ENCODE measurements at regions of chr6 and their contacts with region 1.

Region 1: DNA sequence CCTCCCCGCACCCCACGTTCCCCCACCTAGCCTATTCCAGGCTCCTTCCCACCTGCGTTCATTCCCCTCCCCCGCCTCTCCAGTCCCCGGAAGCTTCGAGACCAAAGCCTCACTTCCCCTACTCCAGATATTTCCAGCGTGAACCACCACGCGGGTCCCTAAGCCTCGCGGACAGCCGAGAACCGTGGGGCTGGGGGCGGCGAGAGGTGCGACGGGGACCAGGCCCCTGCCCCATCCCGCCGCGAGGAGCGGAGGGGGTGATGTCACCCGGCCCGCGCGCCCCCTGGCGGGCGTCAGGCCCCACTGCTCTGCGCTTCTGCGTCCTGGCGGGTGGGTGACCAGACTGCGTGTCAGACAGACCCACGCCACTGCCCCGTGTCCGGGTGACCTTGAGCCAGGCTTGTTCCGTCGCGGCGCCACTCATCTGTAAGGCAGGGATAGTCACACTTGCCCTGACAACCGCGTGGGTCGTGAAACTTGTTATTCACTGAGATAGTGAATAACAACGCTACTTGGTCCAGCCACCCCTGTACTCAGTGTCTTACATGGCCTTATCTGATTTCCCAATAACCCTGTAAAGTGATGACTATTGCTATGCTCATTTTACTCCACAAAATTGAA is 9.0 kb upstream of the HSP90AB1 start:
- DNase-seq: peak; percentile 84
- H3K4me3 ChIP-seq: peak overlapping the region; percentile 57
- H3K27ac ChIP-seq: no peak overlapping the region
- H3K4me1 ChIP-seq: peaks cover 22% of the 10 kb centered on the region
- CTCF ChIP-seq: peak; percentile 96

Region 2: DNA sequence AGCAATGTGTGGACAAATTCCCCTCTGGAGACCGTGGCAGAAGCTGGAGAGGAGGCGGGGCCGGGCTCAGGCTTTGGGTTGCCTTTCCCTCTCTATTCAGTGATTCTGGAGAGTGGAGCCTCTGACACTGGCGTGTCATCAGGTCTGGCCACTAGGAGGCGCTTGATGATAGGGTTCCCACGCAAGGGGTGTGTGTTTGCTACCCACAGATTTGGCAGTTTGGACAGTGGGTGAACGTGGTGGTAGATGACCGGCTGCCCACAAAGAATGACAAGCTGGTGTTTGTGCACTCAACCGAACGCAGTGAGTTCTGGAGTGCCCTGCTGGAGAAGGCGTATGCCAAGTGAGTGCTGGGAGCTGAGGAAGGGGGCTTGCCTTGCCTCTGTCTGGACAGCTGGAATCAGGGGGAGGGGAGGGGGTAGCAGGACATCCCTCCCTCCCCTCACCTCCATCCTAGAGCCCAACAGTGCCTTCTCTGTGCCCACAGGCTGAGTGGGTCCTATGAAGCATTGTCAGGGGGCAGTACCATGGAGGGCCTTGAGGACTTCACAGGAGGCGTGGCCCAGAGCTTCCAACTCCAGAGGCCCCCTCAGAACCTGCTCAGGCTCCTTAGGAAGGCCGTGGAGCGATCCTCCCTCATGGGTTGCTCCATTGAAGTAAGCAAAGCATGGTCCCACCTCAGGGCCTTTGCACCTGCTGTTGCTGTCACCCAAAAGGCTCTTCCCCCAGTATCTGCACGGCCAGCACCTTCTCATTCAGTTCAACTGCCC is 65.0 kb before region 1 on chr6:
- CTCF ChIA-PET with region 1: interaction called, 3 read pairs
- POLR2A ChIA-PET with region 1: no interaction called
- intact Hi-C with region 1: loop called (anchors 1 kb)
- DNase-seq: peak; percentile 82
- H3K4me3 ChIP-seq: no peak overlapping the region
- H3K27ac ChIP-seq: no peak overlapping the region
- H3K4me1 ChIP-seq: no peaks in the 10 kb centered on the region
- CTCF ChIP-seq: peak; percentile 98

Region 3: DNA sequence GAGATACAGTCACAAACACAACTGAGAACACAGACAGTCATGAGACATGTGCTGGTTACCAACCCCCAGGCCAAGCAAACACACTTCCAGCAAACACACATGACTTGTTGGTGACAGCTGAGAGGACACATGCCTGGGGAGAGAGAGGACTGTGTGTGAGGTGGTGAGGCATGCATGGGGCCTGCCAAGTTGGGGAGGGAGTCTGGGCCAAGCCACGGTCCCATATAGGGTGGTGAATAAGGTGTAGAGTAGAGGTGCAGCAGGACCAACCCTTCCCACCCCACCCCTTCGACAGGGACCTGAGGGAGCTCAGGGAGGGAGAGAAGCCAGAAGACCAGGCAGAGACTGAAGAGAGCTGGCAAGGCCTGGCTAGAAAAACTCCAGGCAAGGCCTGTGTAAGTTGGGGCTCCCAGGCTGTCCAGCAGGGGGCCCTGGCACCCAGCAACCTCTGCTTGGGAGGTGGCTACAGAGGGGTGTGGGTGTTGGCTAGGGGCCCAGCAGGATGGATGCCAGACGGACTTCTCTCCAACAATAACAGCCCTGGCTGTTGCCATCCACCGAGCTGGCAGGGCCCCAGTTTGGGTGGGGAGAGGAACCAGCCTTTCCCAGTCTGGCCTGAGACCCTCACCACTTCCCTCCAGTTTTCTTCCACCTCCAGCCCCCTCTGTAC is 16.5 kb before region 1 on chr6:
- CTCF ChIA-PET with region 1: interaction called, 15 read pairs
- POLR2A ChIA-PET with region 1: interaction called, 15 read pairs
- intact Hi-C with region 1: loop called (anchors 1 kb)
- DNase-seq: peak; percentile 85
- H3K4me3 ChIP-seq: no peak overlapping the region
- H3K27ac ChIP-seq: peak overlapping the region; percentile 56
- H3K4me1 ChIP-seq: peaks cover 82% of the 10 kb centered on the region
- CTCF ChIP-seq: peak; percentile 81

Measured in OCI-LY7 (cell line).